GM12878 (cell line): ENCODE measurements at regions of chr22 and their contacts with region 1.

Region 1: GRCh38 chr22:25572708-25573171 is 8.3 kb downstream of the GRK3 start:
- DNase-seq: peak; percentile 80
- ATAC-seq: peak; percentile 81
- H3K4me3 ChIP-seq: 0 out of 2 replicates have a peak overlapping the region, but pooled peaks have one; percentile 0
- H3K27ac ChIP-seq: peak overlapping the region; percentile 64
- H3K4me1 ChIP-seq: peaks cover 28% of the 10 kb centered on the region
- H3K27me3 ChIP-seq: no peaks in the 10 kb centered on the region
- CTCF ChIP-seq: no peak
- EP300 ChIP-seq: peak; percentile 84 to 92
- POLR2A ChIP-seq: no peak
- RAD21 ChIP-seq: no peak

Region 2: GRCh38 chr22:25362215-25362882 is 210.4 kb before region 1 on chr22:
- CTCF ChIA-PET with region 1: no interaction called
- POLR2A ChIA-PET with region 1: no interaction called
- RAD21 ChIA-PET with region 1: no interaction called
- SMC1A ChIA-PET with region 1: no interaction called
- in situ Hi-C with region 1: no loop called
- intact Hi-C with region 1: no loop called
- DNase-seq: no peak
- ATAC-seq: peak; percentile 95
- H3K4me3 ChIP-seq: no peak overlapping the region
- H3K27ac ChIP-seq: no peak overlapping the region
- H3K4me1 ChIP-seq: peaks cover 5% of the 10 kb centered on the region; the same call in 1 of the 2 replicates
- H3K27me3 ChIP-seq: no peaks in the 10 kb centered on the region
- CTCF ChIP-seq: peak; percentile 80 to 88 (median 86); a peak in 5 of 6 replicates
- EP300 ChIP-seq: no peak
- POLR2A ChIP-seq: no peak
- RAD21 ChIP-seq: peak; percentile 93

Region 3: DNA sequence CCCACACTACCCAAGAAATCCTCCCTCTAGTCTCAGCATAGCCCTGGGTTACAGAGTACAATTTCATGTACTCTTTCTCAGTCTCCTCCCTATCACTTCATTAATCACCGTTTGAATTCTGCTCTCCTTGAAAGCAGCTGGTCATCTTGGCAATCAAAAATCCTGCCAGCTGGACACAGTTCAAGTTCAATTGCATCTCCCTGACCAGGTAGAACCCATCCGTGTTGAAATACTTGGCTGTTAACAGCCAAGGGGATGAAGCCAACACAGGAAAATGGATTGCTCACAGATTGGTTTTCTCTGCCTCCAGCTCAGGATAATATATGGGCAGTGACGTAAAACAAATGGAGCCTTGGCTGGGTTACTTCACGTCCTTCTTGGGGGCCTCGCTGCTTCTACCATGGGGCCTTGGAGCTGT is 63.4 kb before region 1 on chr22:
- CTCF ChIA-PET with region 1: no interaction called
- POLR2A ChIA-PET with region 1: no interaction called
- RAD21 ChIA-PET with region 1: no interaction called
- SMC1A ChIA-PET with region 1: no interaction called
- in situ Hi-C with region 1: no loop called
- intact Hi-C with region 1: no loop called
- DNase-seq: no peak
- ATAC-seq: no peak
- H3K4me3 ChIP-seq: no peak overlapping the region
- H3K27ac ChIP-seq: no peak overlapping the region
- H3K4me1 ChIP-seq: no peaks in the 10 kb centered on the region
- H3K27me3 ChIP-seq: no peaks in the 10 kb centered on the region
- CTCF ChIP-seq: no peak
- EP300 ChIP-seq: no peak
- POLR2A ChIP-seq: no peak
- RAD21 ChIP-seq: no peak

Region 4: GRCh38 chr22:25582946-25583345 is 10.2 kb after region 1 on chr22:
- CTCF ChIA-PET with region 1: interaction called, 4 read pairs
- POLR2A ChIA-PET with region 1: interaction called, 4 read pairs
- RAD21 ChIA-PET with region 1: interaction called, 8 read pairs
- SMC1A ChIA-PET with region 1: interaction called, 16 read pairs
- in situ Hi-C with region 1: no loop called
- intact Hi-C with region 1: no loop called
- DNase-seq: no peak
- ATAC-seq: no peak
- H3K4me3 ChIP-seq: no peak overlapping the region
- H3K27ac ChIP-seq: no peak overlapping the region
- H3K4me1 ChIP-seq: peaks cover 3% of the 10 kb centered on the region; the same call in 1 of the 2 replicates
- H3K27me3 ChIP-seq: no peaks in the 10 kb centered on the region
- CTCF ChIP-seq: no peak
- EP300 ChIP-seq: no peak
- POLR2A ChIP-seq: no peak
- RAD21 ChIP-seq: no peak

Region 5: DNA sequence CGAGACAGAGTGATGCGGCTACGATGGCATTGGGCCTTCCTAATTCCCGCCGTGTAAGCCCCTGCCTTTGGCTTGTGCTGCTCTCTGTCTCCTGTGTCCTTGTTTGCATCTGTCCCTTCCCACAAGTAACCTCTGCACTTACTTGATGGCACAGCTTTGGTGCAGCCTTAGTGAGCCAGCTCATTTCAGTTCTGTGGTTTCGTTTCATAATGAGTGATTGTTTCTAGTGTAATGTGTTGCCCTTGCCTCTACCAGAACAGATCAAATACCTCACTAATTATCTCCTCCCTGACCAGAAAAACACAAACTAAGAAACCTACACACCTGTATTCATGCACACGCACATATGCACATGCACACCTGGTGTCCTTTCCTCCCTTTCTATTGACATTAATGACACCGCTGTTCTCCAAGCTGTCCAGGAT is 50.6 kb after region 1 on chr22:
- CTCF ChIA-PET with region 1: interaction called, 8 read pairs
- POLR2A ChIA-PET with region 1: interaction called, 10 read pairs
- RAD21 ChIA-PET with region 1: interaction called, 32 read pairs
- SMC1A ChIA-PET with region 1: interaction called, 61 read pairs
- in situ Hi-C with region 1: no loop called
- intact Hi-C with region 1: loop called (anchors 1 kb)
- DNase-seq: peak; percentile 93
- ATAC-seq: peak; percentile 96
- H3K4me3 ChIP-seq: no peak overlapping the region; the same call in 1 of the 2 replicates
- H3K27ac ChIP-seq: peak overlapping the region; percentile 65
- H3K4me1 ChIP-seq: peaks cover 54% of the 10 kb centered on the region
- H3K27me3 ChIP-seq: no peaks in the 10 kb centered on the region
- CTCF ChIP-seq: no peak
- EP300 ChIP-seq: peak; percentile 80 to 85
- POLR2A ChIP-seq: no peak
- RAD21 ChIP-seq: no peak

Region 6: GRCh38 chr22:25645266-25645665 is 72.5 kb after region 1 on chr22:
- CTCF ChIA-PET with region 1: interaction called, 5 read pairs
- POLR2A ChIA-PET with region 1: interaction called, 4 read pairs
- RAD21 ChIA-PET with region 1: interaction called, 34 read pairs
- SMC1A ChIA-PET with region 1: interaction called, 20 read pairs
- in situ Hi-C with region 1: no loop called
- intact Hi-C with region 1: no loop called
- DNase-seq: no peak
- ATAC-seq: no peak
- H3K4me3 ChIP-seq: no peak overlapping the region
- H3K27ac ChIP-seq: no peak overlapping the region
- H3K4me1 ChIP-seq: peaks cover 13% of the 10 kb centered on the region; the same call in 1 of the 2 replicates
- H3K27me3 ChIP-seq: no peaks in the 10 kb centered on the region
- CTCF ChIP-seq: no peak
- EP300 ChIP-seq: no peak
- POLR2A ChIP-seq: no peak
- RAD21 ChIP-seq: no peak

Region 7: DNA sequence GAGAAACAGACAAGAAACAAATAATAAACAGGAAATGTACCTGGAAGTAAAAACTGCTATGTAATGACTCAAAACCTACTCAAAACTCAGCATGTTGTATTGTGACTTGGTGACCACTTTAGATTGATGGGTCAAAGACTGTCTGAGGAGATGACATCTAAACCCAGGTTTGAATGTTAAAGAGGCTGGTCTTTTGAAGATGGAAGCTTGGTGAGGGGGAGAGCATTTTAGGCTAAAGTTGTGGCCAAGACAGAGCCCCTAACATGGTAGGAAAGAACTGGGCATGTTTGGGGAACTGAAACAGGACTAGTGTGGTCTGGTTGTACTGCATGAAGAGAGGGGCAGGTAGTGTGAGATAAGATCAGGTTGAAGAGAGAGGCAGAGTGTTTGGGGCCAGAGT is 84.0 kb after region 1 on chr22:
- CTCF ChIA-PET with region 1: interaction called, 6 read pairs
- POLR2A ChIA-PET with region 1: interaction called, 8 read pairs
- RAD21 ChIA-PET with region 1: interaction called, 26 read pairs
- SMC1A ChIA-PET with region 1: interaction called, 24 read pairs
- in situ Hi-C with region 1: no loop called
- intact Hi-C with region 1: loop called (anchors 5 kb)
- DNase-seq: peak; percentile 77
- ATAC-seq: peak; percentile 99
- H3K4me3 ChIP-seq: no peak overlapping the region
- H3K27ac ChIP-seq: peak overlapping the region; percentile 70
- H3K4me1 ChIP-seq: peaks cover 13% of the 10 kb centered on the region
- H3K27me3 ChIP-seq: no peaks in the 10 kb centered on the region
- CTCF ChIP-seq: no peak
- EP300 ChIP-seq: peak in 1 of 2 experiments; percentile 65; a peak in 2 of 4 replicates
- POLR2A ChIP-seq: no peak
- RAD21 ChIP-seq: no peak

Region 8: DNA sequence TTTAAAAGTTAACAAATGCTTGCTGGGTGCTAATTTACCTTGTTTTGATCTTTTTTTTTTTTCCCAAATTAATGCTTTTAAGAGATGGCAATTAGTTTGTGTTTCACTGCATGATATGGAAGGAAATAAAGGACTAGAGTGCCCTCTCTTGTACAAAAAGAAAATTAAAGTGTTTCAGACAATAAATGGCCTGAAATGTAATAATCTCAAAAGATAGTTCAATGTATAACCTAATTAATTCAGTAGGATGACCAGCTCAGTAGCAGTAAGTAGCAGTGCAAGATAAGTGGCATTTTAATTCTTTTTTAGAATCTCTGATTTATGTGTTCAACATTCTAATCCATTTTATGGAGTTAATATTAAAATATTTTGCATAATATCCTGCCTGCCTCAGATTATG is 129.3 kb after region 1 on chr22:
- CTCF ChIA-PET with region 1: interaction called, 42 read pairs
- POLR2A ChIA-PET with region 1: interaction called, 4 read pairs
- RAD21 ChIA-PET with region 1: interaction called, 57 read pairs
- SMC1A ChIA-PET with region 1: interaction called, 43 read pairs
- in situ Hi-C with region 1: no loop called
- intact Hi-C with region 1: loop called (anchors 2 kb)
- DNase-seq: no peak
- ATAC-seq: peak; percentile 61
- H3K4me3 ChIP-seq: no peak overlapping the region
- H3K27ac ChIP-seq: no peak overlapping the region; the same call in 1 of the 2 replicates
- H3K4me1 ChIP-seq: peaks cover 15% of the 10 kb centered on the region; the same call in 1 of the 2 replicates
- H3K27me3 ChIP-seq: no peaks in the 10 kb centered on the region
- CTCF ChIP-seq: peak; percentile 15 to 57 (median 33); a peak in 2 of 6 replicates
- EP300 ChIP-seq: no peak
- POLR2A ChIP-seq: no peak
- RAD21 ChIP-seq: peak; percentile 72

Region 9: GRCh38 chr22:25772288-25772687 is 199.5 kb after region 1 on chr22:
- CTCF ChIA-PET with region 1: interaction called, 37 read pairs
- POLR2A ChIA-PET with region 1: no interaction called
- RAD21 ChIA-PET with region 1: interaction called, 48 read pairs
- SMC1A ChIA-PET with region 1: interaction called, 19 read pairs
- in situ Hi-C with region 1: no loop called
- intact Hi-C with region 1: no loop called
- DNase-seq: no peak
- ATAC-seq: no peak; the same call in 2 of the 3 replicates
- H3K4me3 ChIP-seq: no peak overlapping the region
- H3K27ac ChIP-seq: no peak overlapping the region
- H3K4me1 ChIP-seq: 0 out of 2 replicates have a peak, but pooled peaks cover 3% of the 10 kb centered on the region
- H3K27me3 ChIP-seq: no peaks in the 10 kb centered on the region
- CTCF ChIP-seq: no peak
- EP300 ChIP-seq: no peak
- POLR2A ChIP-seq: no peak
- RAD21 ChIP-seq: no peak